ENCODE measurements at regions of chr22 and their contacts with region 1.

Region 1: GRCh38 chr22:46250035-46250782 is at the start of gene CDPF1:
- DNase-seq: peak; percentile 88 to 91 (median 89)
- H3K4me3 ChIP-seq: peak within 1 kb of the TSS; percentile 29 to 76
- H3K4me3 Mint-ChIP-seq: peak within 1 kb of the TSS; percentile 64 to 88 (median 80)
- H3K27ac ChIP-seq: peak within 1 kb of the TSS; percentile 63
- H3K27ac Mint-ChIP-seq: peak within 1 kb of the TSS; percentile 41 to 94 (median 82)
- H3K4me1 ChIP-seq: peaks cover 24% of the 10 kb centered on the region
- H3K4me1 Mint-ChIP-seq: peaks cover 15 to 48% (median 24%) of the 10 kb centered on the region in 4 donors
- H3K27me3 ChIP-seq: no peaks in the 10 kb centered on the region
- H3K27me3 Mint-ChIP-seq: no peaks in the 10 kb centered on the region
- total RNA-seq, gene CDPF1: 10.3 to 11.5 TPM

Region 2: DNA sequence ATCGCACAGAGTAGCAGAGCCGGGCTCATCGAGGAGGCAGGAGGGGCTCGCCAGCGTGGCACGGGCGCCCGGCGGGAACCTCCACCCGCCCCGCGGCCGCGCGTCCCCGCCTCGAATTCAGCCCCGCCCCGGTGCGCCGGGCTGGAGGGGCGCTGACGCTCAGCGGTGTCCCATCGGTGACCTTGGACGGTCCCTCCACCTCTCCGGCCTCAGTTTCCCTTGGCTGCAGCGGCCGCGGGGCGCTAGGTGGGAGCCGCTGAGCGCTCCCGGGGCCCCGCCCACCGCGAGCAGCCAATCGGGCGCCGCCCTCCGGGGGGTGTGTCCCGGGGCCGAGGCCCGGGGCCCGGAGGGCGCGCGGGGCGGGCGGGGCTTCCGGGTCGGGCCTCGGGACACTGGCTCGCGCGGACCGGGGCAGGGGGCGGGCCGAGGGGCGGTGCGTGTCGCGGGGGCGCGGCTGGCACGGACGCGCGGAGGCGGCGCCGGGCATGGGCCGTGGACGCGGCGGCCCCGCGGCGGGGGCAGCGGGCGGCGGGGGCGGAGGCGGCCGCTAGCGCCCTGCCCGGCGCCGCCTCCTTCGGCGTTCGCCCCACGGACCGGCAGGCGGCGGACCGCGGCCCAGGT is 100.1 kb before region 1 on chr22 and contains the start of gene PPARA:
- CTCF ChIA-PET with region 1: no interaction called
- POLR2A ChIA-PET with region 1: interaction called, 10 read pairs
- intact Hi-C with region 1: loop called (anchors 1 kb)
- DNase-seq: peak; percentile 76 to 86 (median 80)
- H3K4me3 ChIP-seq: peak within 1 kb of the TSS; percentile 57 to 74
- H3K4me3 Mint-ChIP-seq: peak within 1 kb of the TSS; percentile 77 to 89 (median 83)
- H3K27ac ChIP-seq: peak within 1 kb of the TSS; percentile 61
- H3K27ac Mint-ChIP-seq: peak within 1 kb of the TSS; percentile 76 to 90 (median 85)
- H3K4me1 ChIP-seq: peaks cover 15% of the 10 kb centered on the region
- H3K4me1 Mint-ChIP-seq: peaks cover 12 to 26% (median 16%) of the 10 kb centered on the region in 4 donors
- H3K27me3 ChIP-seq: no peaks in the 10 kb centered on the region
- H3K27me3 Mint-ChIP-seq: no peaks in the 10 kb centered on the region
- total RNA-seq, gene PPARA: 21.3 to 23.2 TPM

Region 3: DNA sequence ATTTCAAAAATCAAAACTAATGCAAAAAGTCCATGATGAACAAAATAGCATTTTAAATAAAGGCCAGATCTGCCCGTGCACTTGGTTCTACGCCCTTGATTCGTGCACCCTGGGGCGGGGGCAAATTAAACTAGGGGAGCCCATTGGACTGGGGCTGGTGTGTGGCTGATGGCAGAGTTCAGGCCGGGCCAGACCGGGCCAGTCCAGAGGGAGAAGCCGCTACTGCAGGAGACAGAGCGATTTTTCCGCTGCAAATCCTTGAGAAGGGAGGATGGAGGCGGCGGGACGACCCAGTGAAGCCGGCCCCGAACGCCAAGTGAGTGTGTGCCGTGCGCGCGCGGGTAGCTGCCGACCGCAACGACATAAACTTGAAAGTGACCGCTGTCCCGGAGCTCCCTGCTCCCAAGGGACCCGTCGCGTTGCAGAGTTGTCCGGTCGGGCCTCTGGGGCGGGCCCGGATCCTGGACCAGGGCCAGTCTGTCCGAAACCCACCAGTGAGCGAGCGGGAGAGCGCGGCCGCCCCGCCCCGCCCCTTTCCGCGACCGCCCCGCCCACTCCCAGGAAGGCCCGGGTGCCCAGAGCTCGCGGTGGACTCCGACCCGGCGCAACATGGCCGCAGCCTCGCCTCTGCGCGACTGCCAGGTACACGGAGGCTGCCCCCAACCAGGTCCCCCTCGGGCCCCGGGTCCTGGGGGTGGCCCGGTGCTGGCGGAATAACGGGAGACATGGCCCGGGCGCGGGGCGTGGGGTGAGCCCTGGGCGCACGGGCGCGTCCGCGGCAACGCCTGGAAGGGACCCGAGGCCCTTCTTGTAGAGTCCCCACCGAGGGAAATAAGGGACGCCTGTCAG is 17.4 kb after region 1 on chr22 and contains the start of gene TTC38:
- CTCF ChIA-PET with region 1: interaction called, 3 read pairs
- POLR2A ChIA-PET with region 1: interaction called, 25 read pairs
- intact Hi-C with region 1: loop called (anchors 1 kb)
- DNase-seq: peak; percentile 22 to 59 (median 26)
- H3K4me3 ChIP-seq: peak within 1 kb of the TSS in 1 of 2 donors; percentile 49
- H3K4me3 Mint-ChIP-seq: peak within 1 kb of the TSS; percentile 86 to 95 (median 91)
- H3K27ac ChIP-seq: peak within 1 kb of the TSS; percentile 18
- H3K27ac Mint-ChIP-seq: peak within 1 kb of the TSS; percentile 16 to 82 (median 69)
- H3K4me1 ChIP-seq: peaks cover 11% of the 10 kb centered on the region
- H3K4me1 Mint-ChIP-seq: peaks cover 9 to 32% (median 15%) of the 10 kb centered on the region in 4 donors
- H3K27me3 ChIP-seq: peaks cover 6% of the 10 kb centered on the region
- H3K27me3 Mint-ChIP-seq: peaks cover 12 to 18% of the 10 kb centered on the region in 2 donors
- total RNA-seq, gene TTC38: 3.9 to 4.3 TPM